Activated T-helper 1 cell treated with anti-CD3 and anti-CD28 coated beads, Interleukin-12 subunit alpha, Interleukin-12 subunit beta, Interleukin-2, Interleukin-4 antibody, amounts not matched to agents 30 ng/mL and 10 ng/mL and 1 ng/mL, durations not matched to agents 14 hours and 24 hours and 36 hours (primary cell): ENCODE measurements at regions of chr11 and their contacts with region 1.

Region 1: DNA sequence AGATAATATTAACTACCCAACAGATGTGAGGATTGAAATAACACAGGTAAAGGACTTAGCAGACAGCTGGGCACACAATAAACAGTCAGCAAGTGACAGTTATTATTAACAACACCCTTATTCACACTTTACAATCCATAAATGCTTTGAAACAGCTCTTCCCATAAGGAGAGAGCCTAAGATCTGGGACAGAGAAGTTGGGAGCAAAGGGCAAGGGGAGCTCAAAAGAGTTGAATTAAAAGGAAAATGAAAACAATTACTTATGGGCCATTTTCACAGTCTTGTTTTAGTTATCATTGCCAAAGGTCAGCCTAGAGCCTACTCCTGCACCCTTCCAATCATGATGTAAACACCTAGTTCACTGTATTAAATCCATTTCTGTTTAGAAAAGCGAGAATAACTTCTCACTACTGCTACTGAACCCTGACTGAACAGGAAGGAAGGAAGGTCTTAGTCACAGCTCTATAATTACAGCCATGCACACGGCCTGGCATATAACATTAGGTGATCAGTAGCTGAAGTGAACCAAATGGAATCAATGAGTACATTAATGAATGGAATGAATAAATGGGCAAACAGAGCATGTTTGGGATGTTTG is 111.3 kb downstream of the PLEKHA7 start:
- DNase-seq: no peak
- H3K4me3 Mint-ChIP-seq: peak overlapping the region; percentile 28
- H3K27ac Mint-ChIP-seq: peak overlapping the region; percentile 86
- H3K4me1 Mint-ChIP-seq: peaks cover 52% of the 10 kb centered on the region
- H3K27me3 Mint-ChIP-seq: no peaks in the 10 kb centered on the region

Region 2: GRCh38 chr11:15118431-15118830 is 1784.4 kb before region 1 on chr11:
- intact Hi-C with region 1: loop called (anchors 2 kb)
- DNase-seq: peak; percentile 60
- H3K4me3 Mint-ChIP-seq: no peak overlapping the region
- H3K27ac Mint-ChIP-seq: peak overlapping the region; percentile 72
- H3K4me1 Mint-ChIP-seq: peaks cover 52% of the 10 kb centered on the region
- H3K27me3 Mint-ChIP-seq: peaks cover 17% of the 10 kb centered on the region

Region 3: DNA sequence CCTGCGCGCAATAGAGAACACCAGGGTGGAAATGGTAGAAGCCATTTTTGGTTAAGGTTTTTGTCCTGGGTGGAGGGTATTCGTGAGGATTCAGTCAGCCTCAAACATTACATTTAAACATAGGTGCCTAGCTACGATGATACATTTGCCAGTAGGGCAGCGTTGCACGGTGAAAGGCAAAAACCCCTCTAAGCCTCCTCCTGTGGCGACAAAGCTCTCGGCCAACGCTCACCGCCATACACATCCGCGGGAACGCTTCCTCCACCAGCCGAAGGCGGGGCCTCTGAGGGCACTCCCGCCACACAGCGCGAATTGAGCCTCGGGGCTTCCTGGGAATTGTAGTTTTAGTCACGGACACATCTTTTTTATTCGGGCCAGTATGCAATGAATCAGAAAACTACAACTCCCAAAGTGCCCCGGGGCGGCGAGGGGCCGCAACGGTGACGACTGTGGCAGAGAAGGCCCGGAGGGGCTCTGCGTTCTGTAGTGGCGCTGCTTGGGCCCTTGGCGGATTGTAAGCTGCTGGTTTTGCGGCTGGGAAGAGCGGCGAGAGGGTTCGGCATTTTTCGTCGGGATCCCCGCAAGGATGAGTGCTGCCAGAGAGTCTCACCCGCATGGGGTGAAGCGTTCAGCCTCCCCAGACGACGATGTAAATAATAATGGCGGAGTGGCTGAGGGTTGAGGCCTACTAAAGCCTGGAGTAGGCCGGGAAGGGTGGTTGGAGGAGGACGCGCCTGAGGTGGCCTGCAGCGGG is 164.5 kb before region 1 on chr11 and contains the start of gene C11orf58:
- intact Hi-C with region 1: loop called (anchors 1 kb)
- DNase-seq: peak; percentile 93
- H3K4me3 Mint-ChIP-seq: peak within 1 kb of the TSS; percentile 73
- H3K27ac Mint-ChIP-seq: peak within 1 kb of the TSS; percentile 88
- H3K4me1 Mint-ChIP-seq: peaks cover 32% of the 10 kb centered on the region
- H3K27me3 Mint-ChIP-seq: no peaks in the 10 kb centered on the region
- total RNA-seq, gene C11orf58: 150 and 152 TPM in 2 replicates

Region 4: DNA sequence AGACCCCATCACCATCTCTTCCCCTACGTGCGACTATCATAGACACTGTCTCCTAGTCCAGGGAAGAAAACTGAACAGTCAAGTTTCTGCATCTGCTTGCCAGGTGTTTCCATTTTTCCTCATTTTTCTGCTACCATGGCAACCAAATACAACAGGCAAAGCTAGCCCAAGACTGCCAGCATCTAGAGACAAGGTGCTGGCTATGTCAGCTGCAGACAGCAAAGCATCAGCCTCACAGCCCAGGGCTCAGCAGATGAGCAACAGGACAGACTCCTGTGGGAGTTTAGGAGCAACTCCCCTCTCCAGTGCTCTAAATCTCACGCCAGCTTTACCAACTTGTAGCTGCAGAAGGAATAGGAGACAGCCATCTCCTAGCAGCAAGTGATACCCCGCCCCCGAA is 40.1 kb before region 1 on chr11:
- intact Hi-C with region 1: loop called (anchors 1 kb)
- DNase-seq: no peak
- H3K4me3 Mint-ChIP-seq: no peak overlapping the region
- H3K27ac Mint-ChIP-seq: no peak overlapping the region
- H3K4me1 Mint-ChIP-seq: peaks cover 26% of the 10 kb centered on the region
- H3K27me3 Mint-ChIP-seq: peaks cover 6% of the 10 kb centered on the region

Region 5: DNA sequence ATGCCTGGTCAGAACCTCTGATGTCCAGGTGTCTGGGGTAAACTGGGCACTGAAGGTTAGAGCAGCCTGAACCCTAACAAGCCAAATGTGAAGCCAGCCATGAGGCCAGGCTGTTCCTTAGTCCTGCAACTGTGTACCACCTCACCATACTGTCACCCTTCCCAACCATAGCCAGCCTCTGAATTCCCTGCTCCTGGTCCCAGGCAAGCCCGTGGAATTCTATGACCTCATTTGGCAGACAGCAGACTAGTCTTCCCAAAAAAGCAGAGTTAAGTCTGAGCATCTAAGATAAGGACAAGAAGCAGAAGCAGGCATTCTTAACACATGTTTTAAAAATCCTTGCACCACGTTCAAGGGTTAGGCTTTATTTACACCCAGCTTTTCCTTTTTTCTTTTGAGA is 29.6 kb before region 1 on chr11:
- intact Hi-C with region 1: no loop called
- DNase-seq: no peak
- H3K4me3 Mint-ChIP-seq: no peak overlapping the region
- H3K27ac Mint-ChIP-seq: no peak overlapping the region
- H3K4me1 Mint-ChIP-seq: no peaks in the 10 kb centered on the region
- H3K27me3 Mint-ChIP-seq: peaks cover 6% of the 10 kb centered on the region

Region 6: DNA sequence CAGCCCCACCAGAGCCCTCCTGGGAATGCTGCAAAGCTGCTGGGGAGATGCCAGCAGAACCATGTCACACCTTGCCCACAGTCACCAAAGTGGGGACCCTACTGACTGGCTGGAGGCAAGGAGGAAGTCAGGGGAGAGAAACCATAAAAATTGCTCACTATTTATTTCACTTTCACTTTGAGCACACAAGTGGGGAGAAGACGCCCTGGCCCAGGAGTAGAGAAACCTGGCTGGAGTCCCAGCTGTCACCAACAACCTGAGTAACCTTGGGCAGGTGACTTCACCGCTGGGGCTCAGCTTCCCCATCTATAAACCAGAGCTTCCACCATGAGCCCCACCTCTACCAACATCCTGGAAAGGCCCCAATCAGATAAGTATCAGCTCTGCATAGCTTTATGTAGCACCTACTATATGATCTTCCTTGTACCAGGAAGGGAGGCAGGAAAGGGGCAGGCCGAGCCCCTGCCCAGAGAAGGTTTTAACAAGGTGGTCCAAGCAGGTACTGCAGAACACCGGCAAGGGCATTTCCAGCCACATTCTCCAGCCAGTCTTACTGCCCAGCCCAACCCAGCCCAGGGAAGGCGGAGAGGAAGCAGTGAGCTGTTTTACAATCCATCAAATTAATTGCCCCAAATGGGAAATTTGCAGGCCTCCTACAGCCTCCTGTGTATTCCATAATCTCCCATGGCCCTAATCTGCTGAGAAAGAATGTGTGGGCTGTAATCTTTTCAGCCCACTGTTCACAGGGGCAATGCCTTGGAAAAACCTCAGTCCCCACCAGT is 83.7 kb after region 1 on chr11:
- intact Hi-C with region 1: loop called (anchors 5 kb)
- DNase-seq: peak; percentile 37
- H3K4me3 Mint-ChIP-seq: no peak overlapping the region
- H3K27ac Mint-ChIP-seq: peak overlapping the region; percentile 8
- H3K4me1 Mint-ChIP-seq: peaks cover 29% of the 10 kb centered on the region
- H3K27me3 Mint-ChIP-seq: peaks cover 2% of the 10 kb centered on the region

Region 7: GRCh38 chr11:17276236-17277023 is 373.6 kb after region 1 on chr11 and contains the start of gene NUCB2:
- intact Hi-C with region 1: loop called (anchors 5 kb)
- DNase-seq: peak; percentile 95
- H3K4me3 Mint-ChIP-seq: peak within 1 kb of the TSS; percentile 87
- H3K27ac Mint-ChIP-seq: peak within 1 kb of the TSS; percentile 77
- H3K4me1 Mint-ChIP-seq: peaks cover 48% of the 10 kb centered on the region
- H3K27me3 Mint-ChIP-seq: peaks cover 3% of the 10 kb centered on the region
- total RNA-seq, gene NUCB2: 51.1 and 61.7 TPM in 2 replicates

Region 8: GRCh38 chr11:18615628-18616392 is 1712.9 kb after region 1 on chr11:
- intact Hi-C with region 1: loop called (anchors 10 kb)
- DNase-seq: no peak
- H3K4me3 Mint-ChIP-seq: peak overlapping the region; percentile 70
- H3K27ac Mint-ChIP-seq: peak overlapping the region; percentile 87
- H3K4me1 Mint-ChIP-seq: peaks cover 67% of the 10 kb centered on the region
- H3K27me3 Mint-ChIP-seq: no peaks in the 10 kb centered on the region